ENCODE measurements at regions of chr11 and their contacts with region 1.

Region 1: GRCh38 chr11:9990221-9990975 is 303.6 kb downstream of the SBF2 start:
- DNase-seq: no peak
- H3K4me3 ChIP-seq: no peak overlapping the region
- H3K27ac ChIP-seq: no peak overlapping the region
- H3K4me1 ChIP-seq: no peaks in the 10 kb centered on the region
- H3K27me3 ChIP-seq: no peaks in the 10 kb centered on the region
- CTCF ChIP-seq: peak in 2 of 4 experiments; percentile 15 to 23
- POLR2A ChIP-seq: no peak

Region 2: DNA sequence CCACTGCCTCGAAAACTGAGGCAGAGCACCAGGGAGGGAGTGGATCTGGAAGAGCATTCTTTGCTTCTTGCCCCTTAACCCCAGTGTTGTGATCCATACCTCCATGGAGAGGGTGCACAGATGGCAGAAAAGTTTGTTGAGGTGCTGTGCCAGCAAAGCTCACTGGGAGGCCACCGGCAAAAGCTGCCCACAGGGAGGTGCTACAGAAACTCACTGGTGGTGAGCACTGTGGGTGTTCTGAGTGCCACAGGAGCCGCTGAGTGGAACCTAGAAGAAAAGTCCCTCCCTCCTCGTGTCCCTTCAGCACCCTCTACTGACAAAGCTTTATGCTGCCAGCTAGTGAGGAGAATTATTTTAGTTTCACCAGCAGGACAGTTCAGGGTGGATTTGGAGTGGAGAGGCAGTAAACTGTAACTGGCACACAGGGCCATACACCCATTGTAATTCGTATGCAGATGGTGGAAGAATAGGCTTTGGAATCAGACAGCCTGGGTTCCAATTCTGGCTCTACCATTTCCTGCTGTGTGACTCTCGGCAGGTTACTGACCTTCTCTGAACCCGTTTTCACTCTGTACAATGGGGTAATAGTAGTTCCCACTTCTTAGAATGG is 241.9 kb before region 1 on chr11:
- intact Hi-C with region 1: no loop called
- DNase-seq: peak; percentile 44
- H3K4me3 ChIP-seq: no peak overlapping the region
- H3K27ac ChIP-seq: no peak overlapping the region
- H3K4me1 ChIP-seq: no peaks in the 10 kb centered on the region
- H3K27me3 ChIP-seq: no peaks in the 10 kb centered on the region
- CTCF ChIP-seq: peak; percentile 33 to 79 (median 68)
- POLR2A ChIP-seq: no peak

Region 3: GRCh38 chr11:10044618-10045017 is 54.2 kb after region 1 on chr11:
- intact Hi-C with region 1: no loop called
- DNase-seq: no peak
- H3K4me3 ChIP-seq: no peak overlapping the region
- H3K27ac ChIP-seq: no peak overlapping the region
- H3K4me1 ChIP-seq: no peaks in the 10 kb centered on the region
- H3K27me3 ChIP-seq: no peaks in the 10 kb centered on the region
- CTCF ChIP-seq: no peak
- POLR2A ChIP-seq: no peak

Region 4: GRCh38 chr11:10108915-10109680 is 118.7 kb after region 1 on chr11:
- intact Hi-C with region 1: no loop called
- DNase-seq: no peak
- H3K4me3 ChIP-seq: no peak overlapping the region
- H3K27ac ChIP-seq: no peak overlapping the region
- H3K4me1 ChIP-seq: no peaks in the 10 kb centered on the region
- H3K27me3 ChIP-seq: no peaks in the 10 kb centered on the region
- CTCF ChIP-seq: no peak
- POLR2A ChIP-seq: no peak

Region 5: DNA sequence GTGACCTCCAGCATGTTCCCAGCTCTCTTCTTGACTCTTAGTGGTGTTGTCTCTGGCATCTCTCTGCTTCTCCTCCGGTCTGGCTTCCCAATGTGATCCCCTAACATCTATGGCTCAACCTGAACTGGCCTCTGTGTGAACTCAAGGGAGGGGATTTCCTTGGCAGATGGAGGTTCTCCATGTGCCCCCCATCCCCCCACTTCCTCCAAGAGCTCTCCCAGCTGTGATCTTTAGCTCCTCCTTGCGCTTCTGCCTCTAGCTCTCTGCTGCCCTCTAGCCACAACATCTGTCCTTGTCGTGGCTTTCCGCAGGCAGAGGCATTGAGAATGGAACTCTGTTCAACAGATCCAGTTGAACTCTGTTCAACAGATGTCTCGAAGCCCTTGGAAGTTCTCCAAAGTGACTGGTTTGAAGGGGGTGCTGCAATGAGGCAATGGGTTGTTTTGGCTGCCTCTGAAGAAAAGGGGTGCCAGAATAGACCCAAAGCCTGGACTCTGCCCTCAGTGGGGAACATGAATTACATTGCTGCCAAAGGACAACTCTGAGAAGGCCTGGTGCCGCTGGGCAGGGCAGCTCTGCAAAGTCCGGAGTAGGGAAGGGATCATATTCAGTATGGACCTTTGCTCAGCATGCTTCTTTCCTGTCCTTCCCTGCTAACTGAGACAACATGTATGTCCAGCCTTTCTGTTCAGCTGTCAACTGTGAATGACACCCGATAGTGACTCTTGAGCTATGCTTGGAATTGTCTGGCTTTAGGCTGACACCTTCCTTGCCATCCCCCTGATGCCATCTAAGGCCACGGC is 376.4 kb after region 1 on chr11:
- intact Hi-C with region 1: loop called (anchors 5 kb)
- DNase-seq: peak; percentile 44
- H3K4me3 ChIP-seq: no peak overlapping the region
- H3K27ac ChIP-seq: no peak overlapping the region
- H3K4me1 ChIP-seq: no peaks in the 10 kb centered on the region
- H3K27me3 ChIP-seq: no peaks in the 10 kb centered on the region
- CTCF ChIP-seq: peak; percentile 37 to 80 (median 54)
- POLR2A ChIP-seq: no peak

Measured in prostate gland (tissue), 2 donors.